Mammary epithelial cell (primary cell): ENCODE measurements at regions of chr11 and their contacts with region 1.

Region 1: GRCh38 chr11:2892215-2893020 is 6.8 kb upstream of the CDKN1C start:
- DNase-seq: no peak
- H3K4me3 ChIP-seq: peak overlapping the region in 2 of 3 experiments; percentile 38 to 48
- H3K27ac ChIP-seq: no peak overlapping the region
- H3K4me1 ChIP-seq: peaks cover 29% of the 10 kb centered on the region
- H3K27me3 ChIP-seq: no peaks in the 10 kb centered on the region
- CTCF ChIP-seq: peak; percentile 68 to 94

Region 2: DNA sequence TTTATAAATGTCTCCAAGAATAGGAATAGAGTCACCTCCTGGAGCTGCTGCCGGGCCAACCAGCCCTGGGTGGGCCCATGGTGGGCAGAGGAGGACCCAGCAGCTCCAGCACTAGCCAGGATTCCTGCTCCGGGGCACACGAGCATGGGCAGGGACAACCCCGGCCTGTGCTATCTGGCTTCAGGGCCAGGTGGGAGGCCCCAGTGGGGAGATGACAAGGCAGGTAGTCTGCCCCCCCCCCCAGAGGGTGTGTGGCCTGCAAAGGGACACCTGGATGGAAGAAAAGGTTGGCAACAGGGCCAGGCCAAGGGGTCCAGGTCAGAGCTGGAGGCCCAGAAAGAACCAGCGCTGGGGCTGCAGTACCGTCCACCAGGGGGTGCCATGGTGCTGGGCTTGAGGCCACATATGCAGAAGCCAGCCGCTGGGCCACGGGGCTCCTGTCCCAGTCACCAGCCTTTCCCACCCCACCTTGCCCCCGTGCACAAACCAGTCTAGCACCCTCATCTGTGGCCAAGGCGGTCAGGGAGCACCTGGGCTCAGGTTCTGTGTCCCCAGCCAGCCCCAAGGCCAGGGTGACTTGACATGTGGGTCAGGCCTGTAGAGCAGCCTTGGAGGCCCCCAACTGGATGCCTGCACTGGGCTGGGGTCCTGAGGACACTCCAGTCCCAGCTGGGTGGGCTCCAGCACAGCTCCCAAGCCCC is 587.1 kb before region 1 on chr11:
- CTCF ChIA-PET with region 1: no interaction called
- dilution Hi-C with region 1: no loop called
- in situ Hi-C with region 1: no loop called
- intact Hi-C with region 1: loop called (anchors 5 kb)
- DNase-seq: peak; percentile 36
- H3K4me3 ChIP-seq: no peak overlapping the region
- H3K27ac ChIP-seq: no peak overlapping the region
- H3K4me1 ChIP-seq: no peaks in the 10 kb centered on the region
- H3K27me3 ChIP-seq: no peaks in the 10 kb centered on the region
- CTCF ChIP-seq: peak; percentile 66 to 91

Region 3: GRCh38 chr11:2940559-2940929 is 48.1 kb after region 1 on chr11:
- CTCF ChIA-PET with region 1: no interaction called
- dilution Hi-C with region 1: loop called (anchors 5 kb)
- in situ Hi-C with region 1: no loop called
- intact Hi-C with region 1: no loop called
- DNase-seq: peak; percentile 57
- H3K4me3 ChIP-seq: no peak overlapping the region
- H3K27ac ChIP-seq: peak overlapping the region; percentile 78
- H3K4me1 ChIP-seq: peaks cover 29% of the 10 kb centered on the region
- H3K27me3 ChIP-seq: no peaks in the 10 kb centered on the region
- CTCF ChIP-seq: no peak

Region 4: DNA sequence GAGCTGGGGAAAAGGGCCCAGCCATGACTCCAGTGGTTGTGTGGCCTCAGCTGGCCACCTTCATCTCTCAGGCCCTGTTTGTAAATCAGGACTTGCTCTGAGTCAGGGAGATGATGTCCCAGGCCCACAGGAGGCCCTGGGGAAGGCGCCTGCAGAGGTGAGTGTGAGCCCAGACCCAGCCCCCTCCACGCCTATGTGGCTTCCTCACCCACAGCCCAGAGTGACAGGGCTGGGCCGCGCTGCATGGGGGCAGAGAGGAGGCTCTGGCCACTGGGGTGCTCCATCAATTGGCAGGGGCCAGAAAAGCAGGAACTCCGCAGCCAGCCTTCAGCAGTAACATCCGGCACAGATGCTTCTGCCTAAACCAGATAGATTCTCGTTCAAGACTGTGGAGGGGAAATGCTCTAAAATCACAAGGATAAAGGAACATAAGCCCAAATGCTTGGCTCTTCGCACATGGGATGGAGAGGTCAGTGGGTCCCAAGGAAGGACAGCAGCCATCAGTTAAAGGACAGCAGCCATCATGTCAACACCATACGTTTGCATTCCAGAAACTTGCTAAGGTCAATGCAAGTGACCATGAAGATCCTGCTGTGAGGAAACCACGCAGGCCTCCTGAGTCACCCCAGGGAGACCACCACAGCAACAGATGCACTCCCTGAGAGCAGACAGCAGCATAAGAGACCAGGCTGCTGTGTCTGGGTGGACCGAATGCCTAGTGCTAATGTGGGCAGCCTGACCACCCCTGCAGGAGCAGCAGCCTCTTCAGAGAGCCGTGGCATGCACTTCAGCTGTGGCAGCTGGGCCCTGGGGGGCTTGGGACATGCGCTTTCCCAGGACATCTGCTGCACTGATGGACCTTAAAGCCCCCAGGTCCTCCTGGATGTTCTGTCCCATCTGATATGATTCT is 244.4 kb after region 1 on chr11:
- CTCF ChIA-PET with region 1: no interaction called
- dilution Hi-C with region 1: no loop called
- in situ Hi-C with region 1: no loop called
- intact Hi-C with region 1: no loop called
- DNase-seq: no peak
- H3K4me3 ChIP-seq: no peak overlapping the region
- H3K27ac ChIP-seq: no peak overlapping the region
- H3K4me1 ChIP-seq: no peaks in the 10 kb centered on the region
- H3K27me3 ChIP-seq: no peaks in the 10 kb centered on the region
- CTCF ChIP-seq: no peak

Region 5: GRCh38 chr11:3217676-3218482 is 325.5 kb after region 1 on chr11:
- CTCF ChIA-PET with region 1: no interaction called
- dilution Hi-C with region 1: no loop called
- in situ Hi-C with region 1: no loop called
- intact Hi-C with region 1: loop called (anchors 2 kb)
- DNase-seq: no peak
- H3K4me3 ChIP-seq: no peak overlapping the region
- H3K27ac ChIP-seq: no peak overlapping the region
- H3K4me1 ChIP-seq: no peaks in the 10 kb centered on the region
- H3K27me3 ChIP-seq: peaks cover 3% of the 10 kb centered on the region
- CTCF ChIP-seq: no peak